ENCODE measurements at regions of chr6 and their contacts with region 1.

Region 1: DNA sequence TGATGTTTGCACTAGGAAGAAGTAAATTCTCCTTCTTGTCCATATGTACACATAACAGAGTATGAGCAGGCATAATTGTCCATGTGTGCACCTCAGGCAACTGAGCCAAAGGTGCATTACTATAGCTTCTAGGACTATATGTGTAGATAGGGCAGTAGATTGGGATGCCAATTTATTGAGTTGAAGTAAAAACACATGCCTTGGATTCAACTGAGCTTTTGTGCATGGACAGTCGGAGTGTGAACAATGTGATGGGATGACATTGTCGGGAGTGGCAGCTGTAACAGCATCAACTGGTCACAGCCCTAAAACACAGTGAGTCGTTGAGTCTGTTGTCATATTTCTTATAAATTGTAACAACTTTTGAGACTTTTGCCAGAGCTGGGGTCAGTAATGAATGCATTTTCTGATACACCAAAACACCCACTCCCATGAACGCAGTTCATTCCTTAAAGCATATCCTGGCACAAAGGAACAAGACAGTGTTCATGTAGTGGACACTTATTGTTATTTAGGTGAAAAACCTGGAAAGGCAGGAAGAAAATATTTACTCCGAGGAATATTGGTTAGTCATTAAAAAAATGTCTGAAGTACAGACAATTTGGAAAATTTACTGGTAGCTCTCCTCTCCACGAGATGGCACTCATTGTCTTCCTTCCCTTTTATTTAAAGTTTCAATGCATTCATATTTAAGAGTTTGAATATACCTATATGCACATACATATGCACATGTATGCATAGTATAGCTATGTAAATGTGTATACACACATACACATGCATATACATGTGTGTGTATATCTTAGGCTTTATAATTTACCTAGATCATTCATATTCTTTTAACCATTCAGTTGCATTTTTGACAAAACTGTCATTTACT is 302.0 kb upstream of the STXBP5 start:
- DNase-seq: peak in 3 of 14 experiments; percentile 5 to 28 (median 20)
- ATAC-seq: no peak
- H3K4me3 ChIP-seq: no peak overlapping the region
- H3K4me3 Mint-ChIP-seq: no peak overlapping the region
- H3K27ac ChIP-seq: no peak overlapping the region
- H3K27ac Mint-ChIP-seq: no peak overlapping the region
- H3K4me1 ChIP-seq: no peaks in the 10 kb centered on the region
- H3K4me1 Mint-ChIP-seq: no peaks in the 10 kb centered on the region
- H3K27me3 ChIP-seq: no peaks in the 10 kb centered on the region
- H3K27me3 Mint-ChIP-seq: no peaks in the 10 kb centered on the region
- CTCF ChIP-seq: peak; percentile 27

Region 2: DNA sequence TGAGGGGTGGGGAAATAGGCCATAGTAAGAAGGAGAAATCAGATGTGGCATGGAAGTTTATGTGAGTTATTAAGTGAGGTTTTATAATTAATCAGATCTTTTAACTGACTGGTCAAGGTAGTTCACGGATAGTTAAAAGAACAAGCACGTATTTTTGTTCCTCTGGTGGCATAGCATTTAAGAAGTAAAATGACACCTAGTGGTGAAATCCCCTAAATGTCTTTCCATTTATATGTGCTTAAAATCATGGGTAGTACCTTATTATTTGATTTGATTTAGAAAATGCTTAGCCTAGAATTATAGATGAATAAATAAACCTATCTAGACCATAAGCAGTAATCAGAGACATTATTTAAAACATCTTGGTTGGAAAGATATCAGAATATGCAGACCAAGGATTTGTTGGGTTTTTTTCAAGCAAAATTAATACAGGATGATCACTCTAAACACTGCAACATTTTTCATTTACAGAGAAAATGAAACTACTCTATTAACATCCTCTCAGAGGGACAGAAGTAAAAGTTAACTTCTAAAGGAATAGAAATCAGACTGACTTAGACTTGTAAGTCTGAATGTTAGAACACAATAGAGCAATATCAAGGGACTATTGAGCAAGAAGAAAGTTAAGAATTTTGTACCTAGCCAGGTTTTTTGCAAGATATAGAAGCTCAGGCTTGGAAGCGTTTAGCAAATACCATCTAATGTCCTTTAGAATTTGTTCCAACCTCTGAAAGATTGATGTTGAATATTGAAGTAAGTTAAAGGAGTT is 383.1 kb after region 1 on chr6:
- CTCF ChIA-PET with region 1: no interaction called
- POLR2A ChIA-PET with region 1: no interaction called
- intact Hi-C with region 1: loop called (anchors 5 kb)
- DNase-seq: peak in 3 of 14 experiments; percentile 41 to 50 (median 48)
- ATAC-seq: no peak
- H3K4me3 ChIP-seq: no peak overlapping the region
- H3K4me3 Mint-ChIP-seq: no peak overlapping the region
- H3K27ac ChIP-seq: no peak overlapping the region
- H3K27ac Mint-ChIP-seq: peak overlapping the region; percentile 2
- H3K4me1 ChIP-seq: no peaks in the 10 kb centered on the region
- H3K4me1 Mint-ChIP-seq: peaks cover 27% of the 10 kb centered on the region
- H3K27me3 ChIP-seq: no peaks in the 10 kb centered on the region
- H3K27me3 Mint-ChIP-seq: no peaks in the 10 kb centered on the region
- CTCF ChIP-seq: peak; percentile 77

Measured in CD4-positive, alpha-beta T cell (primary cell).